ENCODE measurements at regions of chr20 and their contacts with region 1.

Region 1: GRCh38 chr20:62793912-62794724 is 2.2 kb upstream of the MRGBP start:
- DNase-seq: peak; percentile 95 to 100 (median 96)
- ATAC-seq: peak; percentile 89
- H3K4me3 ChIP-seq: peak overlapping the region; percentile 57 to 59
- H3K27ac ChIP-seq: peak overlapping the region; percentile 80 to 96
- H3K4me1 ChIP-seq: peaks cover 5 to 47% of the 10 kb centered on the region in 2 donors
- H3K27me3 ChIP-seq: no peaks in the 10 kb centered on the region
- CTCF ChIP-seq: no peak

Region 2: DNA sequence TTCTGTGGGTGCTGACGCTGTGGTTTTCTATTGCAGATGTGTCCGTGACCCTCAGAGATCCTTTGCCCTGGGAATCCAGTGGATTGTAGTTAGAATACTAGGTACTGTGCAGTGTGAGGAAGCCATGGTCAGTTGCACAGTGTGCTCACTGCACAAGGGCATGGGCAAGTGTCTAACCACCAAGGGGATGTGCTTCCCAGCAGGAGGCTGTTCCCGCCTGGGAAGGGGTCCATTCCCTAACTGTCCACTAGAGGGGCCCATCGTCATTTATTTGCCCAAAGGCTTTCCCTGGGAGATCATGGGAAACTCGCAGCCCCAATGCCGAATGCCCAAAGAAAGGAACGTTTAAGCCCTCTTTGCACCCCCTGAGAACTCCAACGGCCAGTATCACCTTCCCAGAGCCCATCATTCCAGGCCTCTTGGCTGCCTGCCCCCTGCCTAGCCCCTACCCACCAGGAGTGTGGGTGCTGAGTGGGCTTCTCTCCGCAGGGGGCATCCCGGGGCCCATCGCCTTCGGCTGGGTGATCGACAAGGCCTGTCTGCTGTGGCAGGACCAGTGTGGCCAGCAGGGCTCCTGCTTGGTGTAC is 125.6 kb before region 1 on chr20:
- intact Hi-C with region 1: loop called in 1 of 2 experiments (anchors 5 kb)
- DNase-seq: peak in 3 of 4 donors; percentile 55 to 78 (median 61)
- ATAC-seq: peak; percentile 73
- H3K4me3 ChIP-seq: no peak overlapping the region
- H3K27ac ChIP-seq: no peak overlapping the region
- H3K4me1 ChIP-seq: peaks cover 0 to 61% of the 10 kb centered on the region in 2 donors
- H3K27me3 ChIP-seq: peaks cover 0 to 37% of the 10 kb centered on the region in 2 donors
- CTCF ChIP-seq: peak; percentile 76 to 86

Region 3: DNA sequence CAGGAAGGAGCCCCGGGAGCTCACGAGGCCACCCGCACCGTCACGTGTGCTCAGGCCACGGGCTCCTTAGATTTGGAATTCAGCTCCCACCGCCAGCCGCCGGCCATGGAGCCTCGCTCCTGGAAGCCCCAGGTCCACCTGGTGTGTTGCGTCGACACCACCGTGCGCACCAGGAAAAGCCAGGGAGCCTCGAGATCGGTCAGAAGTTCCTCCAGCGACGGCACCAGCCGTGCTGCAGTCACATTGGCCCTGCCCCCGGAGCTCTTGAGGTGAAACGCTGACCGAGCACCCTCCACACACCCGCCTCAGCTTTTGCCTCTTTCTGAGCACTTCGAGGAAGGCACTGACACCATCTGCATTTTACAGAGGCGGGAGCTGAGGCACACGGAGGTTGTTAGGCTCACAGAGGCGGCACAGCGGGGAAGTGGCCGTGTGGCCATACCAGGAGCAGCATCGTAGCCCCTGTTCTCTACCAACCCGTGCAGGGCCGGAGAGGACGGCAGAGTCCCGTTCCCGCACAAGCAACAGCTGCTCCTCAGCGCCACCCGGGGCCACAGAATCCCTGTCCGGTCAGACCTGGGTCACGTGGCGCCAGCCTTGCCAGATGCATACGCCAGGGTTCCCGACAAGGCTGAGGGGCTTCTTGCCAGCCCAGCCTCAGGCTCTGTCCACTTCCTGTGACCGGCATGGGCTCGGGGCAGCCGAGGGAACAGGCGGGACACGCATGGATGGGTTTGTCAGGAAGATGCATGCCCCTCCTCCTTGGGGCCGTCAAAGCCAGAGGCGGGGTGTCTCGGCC is 452.6 kb after region 1 on chr20:
- intact Hi-C with region 1: no loop called
- DNase-seq: peak in 1 of 4 donors; percentile 51
- ATAC-seq: peak; percentile 73
- H3K4me3 ChIP-seq: no peak overlapping the region
- H3K27ac ChIP-seq: no peak overlapping the region
- H3K4me1 ChIP-seq: no peaks in the 10 kb centered on the region
- H3K27me3 ChIP-seq: peaks cover 2 to 96% of the 10 kb centered on the region in 2 donors
- CTCF ChIP-seq: no peak